OCI-LY7 (cell line): ENCODE measurements at regions of chr5 and their contacts with region 1.

Region 1: DNA sequence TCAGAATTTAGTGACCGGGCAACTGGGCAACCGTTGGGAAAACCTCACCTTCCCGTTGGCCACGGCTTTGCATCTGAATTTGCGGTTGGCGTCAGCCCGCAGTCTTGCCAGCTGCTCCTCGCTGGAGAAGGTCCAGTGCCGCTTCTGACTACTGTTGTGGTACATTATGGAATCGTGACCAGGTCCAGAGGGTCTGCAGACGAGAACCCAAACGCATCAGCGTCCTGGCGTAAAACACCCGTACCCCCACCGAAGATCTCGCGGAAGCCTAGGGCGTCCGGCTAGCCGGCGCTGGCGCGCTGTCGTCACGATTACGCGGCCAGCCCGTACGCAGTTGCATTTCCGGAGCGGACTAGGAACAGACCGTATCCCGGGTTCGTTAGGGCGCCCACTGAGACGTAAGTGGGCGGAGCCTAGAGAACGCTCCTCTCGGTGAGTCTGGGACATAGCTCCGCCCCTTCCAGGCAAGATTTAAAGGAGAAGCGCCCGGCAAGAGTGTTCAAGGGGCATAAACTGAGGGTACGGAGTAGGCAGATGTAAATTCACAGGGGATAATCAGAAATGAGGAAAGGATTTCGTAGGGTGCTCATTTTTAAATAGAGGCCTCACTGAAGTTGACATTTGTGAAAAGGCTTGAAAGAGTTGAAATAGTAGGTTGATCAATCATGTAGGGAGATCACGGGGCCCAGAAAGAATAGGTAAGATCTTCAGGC is at the start of gene CCNH:
- DNase-seq: peak; percentile 99
- H3K4me3 ChIP-seq: peak within 1 kb of the TSS; percentile 93
- H3K27ac ChIP-seq: peak within 1 kb of the TSS; percentile 59
- H3K4me1 ChIP-seq: peaks cover 28% of the 10 kb centered on the region
- CTCF ChIP-seq: no peak
- total RNA-seq, gene CCNH: 96.5 and 98.4 TPM in 2 replicates

Region 2: GRCh38 chr5:86617756-86618576 is 794.8 kb before region 1 on chr5 and contains the start of gene COX7C:
- CTCF ChIA-PET with region 1: no interaction called
- POLR2A ChIA-PET with region 1: no interaction called
- intact Hi-C with region 1: loop called (anchors 5 kb)
- DNase-seq: peak; percentile 98
- H3K4me3 ChIP-seq: peak within 1 kb of the TSS; percentile 98
- H3K27ac ChIP-seq: peak within 1 kb of the TSS; percentile 68
- H3K4me1 ChIP-seq: peaks cover 17% of the 10 kb centered on the region
- CTCF ChIP-seq: no peak
- total RNA-seq, gene COX7C: 282 and 290 TPM in 2 replicates

Region 3: DNA sequence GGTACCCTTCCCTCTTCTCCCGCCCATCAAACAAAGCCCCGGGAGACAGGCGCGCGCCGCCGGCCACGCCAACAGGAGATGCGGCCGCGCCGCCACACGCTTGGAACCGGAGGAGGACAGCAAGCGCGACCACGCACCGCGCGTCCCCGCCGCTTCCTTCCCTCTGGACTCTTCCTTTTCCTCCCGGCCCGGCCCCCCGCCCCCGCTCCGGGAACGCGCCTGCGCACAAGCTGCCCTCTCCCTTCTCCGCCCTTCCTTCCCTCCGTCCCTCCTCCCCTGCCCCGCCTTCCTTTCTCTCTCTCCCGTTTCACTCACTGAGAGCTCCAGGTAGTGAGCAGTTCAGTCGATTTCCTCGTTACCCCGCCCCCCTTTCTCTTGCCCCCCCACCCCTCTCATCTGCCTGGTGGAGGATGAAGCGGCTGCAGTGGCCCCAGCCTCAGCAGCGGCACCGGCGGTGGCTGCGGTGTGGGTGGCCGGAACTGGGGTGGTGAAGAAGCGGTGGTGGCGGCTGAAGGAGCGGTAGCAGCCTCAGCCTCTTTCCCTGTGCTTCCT is 145.1 kb before region 1 on chr5 and contains the start of gene RASA1:
- CTCF ChIA-PET with region 1: no interaction called
- POLR2A ChIA-PET with region 1: interaction called, 7 read pairs
- intact Hi-C with region 1: loop called (anchors 2 kb)
- DNase-seq: peak; percentile 86
- H3K4me3 ChIP-seq: peak within 1 kb of the TSS; percentile 84
- H3K27ac ChIP-seq: peak within 1 kb of the TSS; percentile 74
- H3K4me1 ChIP-seq: peaks cover 16% of the 10 kb centered on the region
- CTCF ChIP-seq: no peak
- total RNA-seq, gene RASA1: 17.1 and 18.1 TPM in 2 replicates

Region 4: DNA sequence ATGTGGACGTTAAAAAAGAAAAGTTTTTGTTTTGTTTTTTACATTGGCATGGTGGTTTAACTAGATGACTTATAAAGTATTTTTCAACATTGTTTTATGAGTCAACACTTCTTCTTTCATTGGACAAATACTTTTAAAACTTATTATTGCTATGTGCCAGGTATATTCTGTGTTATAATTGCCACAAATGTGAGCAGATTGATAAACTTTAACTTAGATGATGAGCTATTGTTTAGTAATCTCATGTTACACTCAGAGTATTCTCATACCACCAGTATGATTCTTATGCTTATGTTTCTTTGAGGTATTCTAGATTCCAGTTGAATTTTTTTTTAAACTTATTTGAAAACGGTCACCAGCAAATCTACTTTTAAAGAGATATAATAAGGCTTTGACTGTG is 84.8 kb before region 1 on chr5:
- CTCF ChIA-PET with region 1: no interaction called
- POLR2A ChIA-PET with region 1: no interaction called
- intact Hi-C with region 1: no loop called
- DNase-seq: no peak
- H3K4me3 ChIP-seq: no peak overlapping the region
- H3K27ac ChIP-seq: no peak overlapping the region
- H3K4me1 ChIP-seq: no peaks in the 10 kb centered on the region
- CTCF ChIP-seq: no peak